Mammary epithelial cell (primary cell): ENCODE measurements at regions of chr16 and their contacts with region 1.

Region 1: GRCh38 chr16:87123356-87124001 is 193.7 kb downstream of the C16orf95 start:
- DNase-seq: no peak
- H3K4me3 ChIP-seq: no peak overlapping the region
- H3K27ac ChIP-seq: no peak overlapping the region
- H3K4me1 ChIP-seq: peaks cover 9% of the 10 kb centered on the region
- H3K27me3 ChIP-seq: no peaks in the 10 kb centered on the region
- CTCF ChIP-seq: no peak

Region 2: DNA sequence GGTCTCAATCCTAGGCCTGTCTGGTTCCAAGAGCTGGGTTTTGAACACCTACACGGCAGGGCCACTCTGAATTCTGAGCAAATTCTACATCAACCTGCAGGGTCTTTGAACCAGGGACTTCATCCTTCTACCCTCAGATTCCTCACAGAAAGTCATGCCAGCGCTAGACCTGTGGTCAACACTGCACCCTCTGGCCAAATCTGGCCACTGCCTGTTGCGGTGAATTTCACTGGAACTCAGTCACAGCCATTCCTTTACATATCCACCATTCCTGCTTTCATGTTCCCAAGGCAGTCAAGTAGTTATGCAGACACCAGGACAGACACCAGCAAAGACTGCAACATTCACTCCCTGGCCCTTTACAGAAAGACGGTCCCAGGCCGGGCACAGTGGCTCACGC is 49.2 kb after region 1 on chr16:
- CTCF ChIA-PET with region 1: no interaction called
- dilution Hi-C with region 1: loop called (anchors 5 kb)
- in situ Hi-C with region 1: no loop called
- intact Hi-C with region 1: loop called (anchors 1 kb)
- DNase-seq: no peak
- H3K4me3 ChIP-seq: no peak overlapping the region
- H3K27ac ChIP-seq: no peak overlapping the region
- H3K4me1 ChIP-seq: no peaks in the 10 kb centered on the region
- H3K27me3 ChIP-seq: no peaks in the 10 kb centered on the region
- CTCF ChIP-seq: no peak

Region 3: GRCh38 chr16:87216474-87217275 is 93.2 kb after region 1 on chr16:
- CTCF ChIA-PET with region 1: no interaction called
- dilution Hi-C with region 1: loop called (anchors 5 kb)
- in situ Hi-C with region 1: no loop called
- intact Hi-C with region 1: no loop called
- DNase-seq: no peak
- H3K4me3 ChIP-seq: no peak overlapping the region
- H3K27ac ChIP-seq: no peak overlapping the region
- H3K4me1 ChIP-seq: no peaks in the 10 kb centered on the region
- H3K27me3 ChIP-seq: no peaks in the 10 kb centered on the region
- CTCF ChIP-seq: no peak

Region 4: GRCh38 chr16:87531418-87531817 is 407.9 kb after region 1 on chr16:
- CTCF ChIA-PET with region 1: no interaction called
- dilution Hi-C with region 1: no loop called
- in situ Hi-C with region 1: no loop called
- intact Hi-C with region 1: no loop called
- DNase-seq: no peak
- H3K4me3 ChIP-seq: no peak overlapping the region
- H3K27ac ChIP-seq: no peak overlapping the region
- H3K4me1 ChIP-seq: no peaks in the 10 kb centered on the region
- H3K27me3 ChIP-seq: no peaks in the 10 kb centered on the region
- CTCF ChIP-seq: no peak